CD4-positive, alpha-beta memory T cell (primary cell): ENCODE measurements at regions of chr7 and their contacts with region 1.

Region 1: DNA sequence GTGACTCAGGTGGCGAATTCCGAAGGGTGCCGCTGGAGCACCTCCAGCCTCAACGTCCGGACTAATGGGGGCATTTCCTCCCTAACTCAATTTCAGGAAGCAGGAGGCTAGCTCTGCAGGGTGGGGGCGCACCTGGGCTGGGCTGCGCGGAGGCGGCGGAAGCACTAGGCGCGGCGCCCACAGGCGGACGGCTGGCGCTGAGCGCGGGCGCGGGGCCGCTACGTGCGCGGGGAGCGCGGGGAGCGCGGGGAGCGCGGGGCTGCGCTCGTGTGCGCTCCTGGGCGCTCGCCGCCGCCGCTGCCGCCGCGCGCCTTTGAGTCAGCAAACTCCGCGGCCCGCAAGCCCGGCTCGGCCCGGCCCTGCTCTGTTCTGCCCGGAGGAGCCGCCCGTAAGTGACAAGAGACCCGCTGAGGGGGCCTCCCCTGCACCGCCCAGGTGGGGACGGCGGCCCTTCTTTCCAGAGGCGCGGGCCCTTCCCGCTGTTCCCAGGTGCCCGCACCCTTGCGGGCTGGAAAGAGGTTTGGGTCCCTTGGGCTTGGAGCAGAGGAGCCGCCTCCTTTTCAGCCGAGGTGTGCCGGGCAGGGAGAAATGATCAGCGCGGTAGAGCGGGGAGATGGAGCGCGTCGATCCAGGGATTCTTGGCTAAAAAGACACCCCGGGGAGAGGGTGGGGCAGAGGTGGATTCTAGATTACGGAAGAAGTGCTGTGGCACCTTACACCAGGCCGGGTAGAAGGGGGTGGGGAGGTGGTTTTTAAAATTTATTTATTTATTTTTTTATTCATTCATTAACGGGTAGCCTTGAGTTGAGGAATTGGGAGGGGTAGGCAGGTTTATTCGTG is at the start of gene SNX10:
- DNase-seq: peak; percentile 61 to 74 (median 69)
- H3K4me3 ChIP-seq: peak within 1 kb of the TSS; percentile 43 to 61
- H3K4me3 Mint-ChIP-seq: peak within 1 kb of the TSS; percentile 90 to 97 (median 92)
- H3K27ac ChIP-seq: peak within 1 kb of the TSS; percentile 39
- H3K27ac Mint-ChIP-seq: peak within 1 kb of the TSS; percentile 79 to 93 (median 88)
- H3K4me1 ChIP-seq: peaks cover 32% of the 10 kb centered on the region
- H3K4me1 Mint-ChIP-seq: peaks cover 24 to 42% (median 34%) of the 10 kb centered on the region in 4 donors
- H3K27me3 ChIP-seq: no peaks in the 10 kb centered on the region
- H3K27me3 Mint-ChIP-seq: no peaks in the 10 kb centered on the region
- total RNA-seq, gene SNX10: 8.4 to 8.7 TPM

Region 2: DNA sequence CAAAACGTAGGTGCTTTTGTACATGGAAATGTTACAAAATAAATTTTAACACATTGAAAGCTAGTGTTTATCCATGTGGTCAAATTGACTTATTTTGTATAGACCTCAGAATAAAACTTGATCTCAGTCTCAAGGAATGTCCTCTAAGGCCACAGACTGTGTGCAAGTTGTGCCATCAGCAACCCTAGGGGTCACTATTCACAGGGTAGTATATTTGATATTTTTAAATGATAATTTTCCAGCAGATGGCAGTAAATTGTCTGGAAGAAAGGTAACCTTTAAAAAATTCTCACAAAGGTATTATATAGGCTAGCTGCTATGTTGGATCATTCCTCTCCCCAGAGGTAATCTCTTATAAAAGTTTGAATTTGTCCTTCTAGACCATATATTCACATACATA is 13.1 kb before region 1 on chr7:
- CTCF ChIA-PET with region 1: interaction called, 6 read pairs
- POLR2A ChIA-PET with region 1: interaction called, 6 read pairs
- intact Hi-C with region 1: loop called (anchors 2 kb)
- DNase-seq: peak in 4 of 5 donors; percentile 14 to 33 (median 26)
- H3K4me3 ChIP-seq: no peak overlapping the region
- H3K4me3 Mint-ChIP-seq: peak overlapping the region in 1 of 8 donors; percentile 25
- H3K27ac ChIP-seq: no peak overlapping the region
- H3K27ac Mint-ChIP-seq: no peak overlapping the region
- H3K4me1 ChIP-seq: peaks cover 5% of the 10 kb centered on the region
- H3K4me1 Mint-ChIP-seq: peaks cover 8 to 19% (median 12%) of the 10 kb centered on the region in 4 donors
- H3K27me3 ChIP-seq: no peaks in the 10 kb centered on the region
- H3K27me3 Mint-ChIP-seq: no peaks in the 10 kb centered on the region

Region 3: GRCh38 chr7:26311798-26312197 is 19.9 kb after region 1 on chr7:
- CTCF ChIA-PET with region 1: no interaction called
- POLR2A ChIA-PET with region 1: no interaction called
- intact Hi-C with region 1: no loop called
- DNase-seq: no peak
- H3K4me3 ChIP-seq: no peak overlapping the region
- H3K4me3 Mint-ChIP-seq: no peak overlapping the region
- H3K27ac ChIP-seq: no peak overlapping the region
- H3K27ac Mint-ChIP-seq: no peak overlapping the region
- H3K4me1 ChIP-seq: no peaks in the 10 kb centered on the region
- H3K4me1 Mint-ChIP-seq: peaks cover 0 to 6% (median 1%) of the 10 kb centered on the region in 4 donors
- H3K27me3 ChIP-seq: no peaks in the 10 kb centered on the region
- H3K27me3 Mint-ChIP-seq: no peaks in the 10 kb centered on the region